ENCODE measurements at regions of chr20 and their contacts with region 1.

Region 1: DNA sequence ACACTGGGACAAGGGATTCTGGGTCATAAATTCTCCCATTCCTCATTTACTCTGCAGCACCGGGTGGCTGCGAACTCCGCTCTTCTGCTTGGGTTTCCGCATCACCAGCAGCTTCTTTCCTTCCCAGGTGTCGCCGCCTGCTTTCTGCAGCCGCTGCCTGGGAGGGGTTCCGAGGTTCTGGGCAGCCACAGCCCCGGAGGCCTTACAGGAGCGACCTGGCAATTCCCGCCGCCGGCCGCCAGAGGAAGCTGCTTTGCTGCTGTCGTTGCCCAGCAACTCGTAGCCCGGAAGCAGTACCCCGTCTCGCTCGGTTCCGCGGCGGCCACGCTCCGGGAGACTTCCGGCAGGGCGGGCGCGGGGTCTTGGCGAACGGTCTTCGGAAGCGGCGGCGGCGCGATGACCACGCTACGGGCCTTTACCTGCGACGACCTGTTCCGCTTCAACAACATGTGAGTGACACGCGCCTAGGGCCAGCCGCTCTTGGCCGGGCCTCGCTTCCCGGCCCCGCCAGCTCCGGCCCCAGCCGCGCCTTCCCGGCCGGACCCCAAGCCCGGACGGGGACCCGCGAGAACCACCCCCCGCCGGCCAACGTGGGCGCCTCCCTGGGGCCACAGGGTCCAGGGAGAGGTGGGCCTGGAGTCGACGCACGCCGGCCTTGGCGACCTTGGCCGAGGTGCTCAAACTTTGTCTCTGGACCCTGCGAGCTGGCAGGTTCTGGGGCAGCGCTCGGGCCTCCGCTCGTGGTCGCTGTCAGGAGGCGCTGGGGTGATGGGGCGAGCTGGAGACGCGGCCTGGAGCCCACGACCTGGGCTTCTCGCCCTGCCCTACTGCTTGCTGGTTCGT is at the start of gene NAA20:
- DNase-seq: peak; percentile 75 to 94 (median 91)
- ATAC-seq: peak; percentile 94
- H3K4me3 ChIP-seq: peak within 1 kb of the TSS; percentile 77 to 89
- H3K4me3 Mint-ChIP-seq: peak within 1 kb of the TSS; percentile 91
- H3K27ac ChIP-seq: peak within 1 kb of the TSS; percentile 63 to 82
- H3K27ac Mint-ChIP-seq: peak within 1 kb of the TSS; percentile 91
- H3K4me1 ChIP-seq: peaks cover 44% of the 10 kb centered on the region
- H3K4me1 Mint-ChIP-seq: peaks cover 53% of the 10 kb centered on the region
- H3K27me3 ChIP-seq: no peaks in the 10 kb centered on the region
- H3K27me3 Mint-ChIP-seq: no peaks in the 10 kb centered on the region
- CTCF ChIP-seq: peak; percentile 58
- total RNA-seq, gene NAA20: 32.9 to 33.2 TPM

Region 2: DNA sequence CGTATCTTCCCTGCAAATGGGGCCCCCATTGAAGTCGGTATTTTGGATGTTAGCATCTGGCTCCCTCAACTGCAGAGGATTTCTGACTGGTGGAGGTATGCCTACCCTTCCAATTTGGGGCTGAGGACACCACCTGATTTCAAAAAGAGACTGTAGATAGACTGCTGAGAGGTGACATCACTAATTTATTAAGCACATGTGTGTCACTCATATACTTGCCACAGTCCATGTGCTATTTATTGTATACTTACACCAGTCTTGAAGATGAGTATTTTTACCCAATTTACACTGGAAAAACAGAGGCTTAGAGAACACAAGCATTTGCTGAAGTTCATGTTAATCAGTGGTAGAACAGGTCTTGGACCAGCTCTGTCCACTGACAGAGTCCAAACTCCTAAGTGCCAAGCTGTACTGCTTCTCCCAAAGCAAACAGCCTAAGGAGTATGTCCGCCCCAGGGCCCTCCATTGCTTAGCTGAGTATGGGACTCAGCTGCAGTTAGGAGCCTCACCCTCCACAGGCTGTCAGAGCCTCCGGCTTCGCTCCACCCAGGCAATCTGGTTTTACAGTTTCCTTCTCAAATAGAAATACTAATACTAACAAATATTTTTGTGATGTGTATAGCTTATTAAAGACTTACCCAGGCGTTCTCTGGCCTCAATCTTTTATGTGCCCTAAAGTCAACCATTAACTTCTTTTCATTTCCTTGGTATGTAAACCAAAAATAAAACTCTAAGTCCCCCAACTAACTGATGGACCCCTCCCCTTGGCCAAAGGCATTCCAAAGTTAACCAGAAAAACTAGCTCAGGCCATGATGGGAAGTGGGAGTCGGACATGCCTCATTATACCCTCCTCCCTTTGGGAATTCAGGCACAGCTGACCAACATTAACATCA is 241.6 kb before region 1 on chr20:
- CTCF ChIA-PET with region 1: no interaction called
- POLR2A ChIA-PET with region 1: no interaction called
- intact Hi-C with region 1: no loop called
- DNase-seq: no peak
- ATAC-seq: no peak
- H3K4me3 ChIP-seq: no peak overlapping the region
- H3K4me3 Mint-ChIP-seq: no peak overlapping the region
- H3K27ac ChIP-seq: no peak overlapping the region
- H3K27ac Mint-ChIP-seq: no peak overlapping the region
- H3K4me1 ChIP-seq: no peaks in the 10 kb centered on the region
- H3K4me1 Mint-ChIP-seq: no peaks in the 10 kb centered on the region
- H3K27me3 ChIP-seq: no peaks in the 10 kb centered on the region
- H3K27me3 Mint-ChIP-seq: peaks cover 2% of the 10 kb centered on the region
- CTCF ChIP-seq: no peak

Region 3: GRCh38 chr20:20052074-20052970 is 35.1 kb after region 1 on chr20 and contains the starts of genes CFAP61 and CRNKL1:
- CTCF ChIA-PET with region 1: interaction called, 10 read pairs
- POLR2A ChIA-PET with region 1: interaction called, 17 read pairs
- intact Hi-C with region 1: loop called (anchors 1 kb)
- DNase-seq: peak; percentile 93 to 99 (median 98)
- ATAC-seq: peak; percentile 94
- H3K4me3 ChIP-seq: peak within 1 kb of the TSS; percentile 86 to 96
- H3K4me3 Mint-ChIP-seq: peak within 1 kb of the TSS; percentile 99
- H3K27ac ChIP-seq: peak within 1 kb of the TSS; percentile 86 to 92
- H3K27ac Mint-ChIP-seq: peak within 1 kb of the TSS; percentile 98
- H3K4me1 ChIP-seq: peaks cover 12% of the 10 kb centered on the region
- H3K4me1 Mint-ChIP-seq: peaks cover 29% of the 10 kb centered on the region
- H3K27me3 ChIP-seq: no peaks in the 10 kb centered on the region
- H3K27me3 Mint-ChIP-seq: peaks cover 10% of the 10 kb centered on the region
- CTCF ChIP-seq: no peak
- total RNA-seq, gene CFAP61: not detected
- total RNA-seq, gene CRNKL1: 34.1 to 39.7 TPM

Measured in CD8-positive, alpha-beta T cell (primary cell).